ENCODE measurements at regions of chr9 and their contacts with region 1.

Region 1: GRCh38 chr9:13450723-13451122 is 171.2 kb upstream of the MPDZ start:
- DNase-seq: no peak
- ATAC-seq: peak in 1 of 4 donors; percentile 26
- H3K4me3 ChIP-seq: no peak overlapping the region
- H3K27ac ChIP-seq: no peak overlapping the region
- H3K4me1 ChIP-seq: peaks cover 0 to 47% (median 25%) of the 10 kb centered on the region in 12 donors
- H3K27me3 ChIP-seq: no peaks in the 10 kb centered on the region
- CTCF ChIP-seq: no peak
- POLR2A ChIP-seq: no peak

Region 2: DNA sequence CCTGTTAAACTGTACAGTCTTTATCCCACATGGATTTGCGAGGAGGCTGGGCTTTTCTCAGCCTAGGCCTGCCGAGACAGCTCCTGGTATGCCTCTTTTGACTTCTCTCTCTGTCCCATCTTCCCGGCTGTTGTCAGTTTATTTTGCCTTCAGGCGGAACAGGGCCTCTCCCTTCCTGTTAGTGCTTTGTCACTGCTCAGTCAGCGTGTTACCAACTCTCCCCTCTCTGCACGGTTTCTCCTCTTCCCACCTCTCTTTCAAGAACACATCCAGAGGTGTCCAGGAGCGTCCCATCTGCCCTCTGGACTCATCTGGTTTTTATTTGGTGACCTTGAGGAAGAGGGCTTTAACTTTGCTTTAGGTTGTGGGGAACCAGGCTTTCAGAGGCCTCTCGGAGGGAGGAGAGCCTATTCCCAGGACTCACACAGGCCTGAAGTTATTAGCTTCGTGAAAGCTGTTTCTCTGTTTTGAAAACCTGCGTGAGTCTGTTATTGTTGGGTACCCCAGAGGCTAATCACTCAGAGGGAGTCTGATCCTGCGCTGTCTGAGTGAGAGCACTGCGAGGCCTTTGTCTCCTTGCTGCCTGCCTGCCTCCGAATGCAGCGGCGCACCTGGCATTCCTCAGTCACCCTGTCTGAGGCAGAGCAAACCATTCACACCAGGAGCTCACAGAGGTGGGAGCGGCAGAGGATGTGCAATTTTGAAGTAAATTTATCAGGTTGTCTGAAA is 63.2 kb after region 1 on chr9:
- intact Hi-C with region 1: loop called in 1 of 10 experiments (anchors 10 kb)
- DNase-seq: peak in 1 of 5 donors; percentile 31
- ATAC-seq: peak; percentile 18 to 65 (median 56)
- H3K4me3 ChIP-seq: no peak overlapping the region
- H3K27ac ChIP-seq: peak overlapping the region; percentile 37 to 78 (median 66)
- H3K4me1 ChIP-seq: peaks cover 0 to 28% (median 12%) of the 10 kb centered on the region in 12 donors
- H3K27me3 ChIP-seq: no peaks in the 10 kb centered on the region
- CTCF ChIP-seq: no peak
- POLR2A ChIP-seq: no peak

Region 3: GRCh38 chr9:13575558-13575957 is 124.8 kb after region 1 on chr9:
- intact Hi-C with region 1: loop called in 1 of 10 experiments (anchors 5 kb)
- DNase-seq: peak in 3 of 5 donors; percentile 41 to 61 (median 50)
- ATAC-seq: peak; percentile 55 to 91 (median 70)
- H3K4me3 ChIP-seq: no peak overlapping the region
- H3K27ac ChIP-seq: peak overlapping the region in 10 of 12 donors; percentile 25 to 73 (median 43)
- H3K4me1 ChIP-seq: peaks cover 0 to 19% (median 6%) of the 10 kb centered on the region in 12 donors
- H3K27me3 ChIP-seq: no peaks in the 10 kb centered on the region
- CTCF ChIP-seq: no peak
- POLR2A ChIP-seq: no peak

Region 4: GRCh38 chr9:13621872-13622564 is 171.3 kb after region 1 on chr9:
- intact Hi-C with region 1: no loop called
- DNase-seq: no peak
- ATAC-seq: peak in 3 of 4 donors; percentile 83 to 91 (median 89)
- H3K4me3 ChIP-seq: no peak overlapping the region
- H3K27ac ChIP-seq: peak overlapping the region in 7 of 12 donors; percentile 4 to 64 (median 41)
- H3K4me1 ChIP-seq: peaks cover 0 to 16% (median 0%) of the 10 kb centered on the region in 12 donors
- H3K27me3 ChIP-seq: no peaks in the 10 kb centered on the region
- CTCF ChIP-seq: no peak
- POLR2A ChIP-seq: no peak

Region 5: DNA sequence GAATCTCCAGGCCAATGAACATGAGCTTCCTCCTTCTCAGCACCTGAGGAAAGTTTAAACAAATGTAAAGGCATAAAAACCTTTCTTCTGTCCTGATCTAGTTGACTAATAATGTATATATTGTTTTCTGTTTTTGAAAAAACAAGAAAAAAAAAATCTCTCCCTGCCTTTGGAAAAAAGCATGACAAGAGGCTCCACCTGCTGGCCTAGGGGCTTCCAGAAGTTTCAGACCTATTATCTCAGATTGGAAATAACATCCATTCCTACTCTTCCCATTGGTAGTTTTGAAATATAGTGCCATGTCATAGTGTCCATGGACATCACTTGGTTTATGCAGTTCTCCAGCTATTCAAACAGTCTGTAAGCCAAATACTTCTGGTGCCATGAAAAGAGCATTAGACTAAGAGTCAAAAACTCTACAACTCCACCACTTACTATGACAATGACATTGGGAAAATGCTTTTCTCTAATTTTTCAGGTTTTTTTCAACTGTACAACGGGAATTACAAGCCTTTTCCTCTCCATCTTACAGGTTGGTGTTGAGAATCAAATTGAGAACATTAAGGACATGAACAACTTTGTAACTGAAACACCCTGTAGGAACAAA is 238.4 kb after region 1 on chr9:
- intact Hi-C with region 1: loop called in 5 of 10 experiments (anchors 5 to 10 kb)
- DNase-seq: peak in 1 of 5 donors; percentile 32
- ATAC-seq: peak in 1 of 4 donors; percentile 23
- H3K4me3 ChIP-seq: no peak overlapping the region
- H3K27ac ChIP-seq: peak overlapping the region in 6 of 12 donors; percentile 1 to 33 (median 16)
- H3K4me1 ChIP-seq: peaks cover 0 to 30% (median 12%) of the 10 kb centered on the region in 12 donors
- H3K27me3 ChIP-seq: no peaks in the 10 kb centered on the region
- CTCF ChIP-seq: peak; percentile 35 to 64 (median 54)
- POLR2A ChIP-seq: no peak

Region 6: DNA sequence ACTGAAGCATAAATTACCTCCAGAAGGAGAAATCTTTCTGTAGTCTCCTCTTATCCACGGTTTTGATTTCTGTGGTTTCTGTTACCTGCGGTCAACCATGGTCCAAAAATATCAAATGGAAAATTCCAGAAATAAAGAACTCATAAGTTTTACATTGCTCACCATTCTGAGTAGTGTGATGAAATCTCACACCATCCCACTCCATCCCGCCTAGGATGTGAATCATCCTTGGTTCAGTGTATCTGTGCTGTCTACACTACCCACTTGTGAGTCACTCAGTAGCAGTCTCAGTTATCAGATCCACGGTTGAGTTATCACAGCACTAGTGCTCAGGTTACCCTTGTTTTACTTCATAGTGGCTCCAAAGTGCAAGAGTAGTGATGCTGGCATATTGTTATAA is 492.0 kb after region 1 on chr9:
- intact Hi-C with region 1: loop called in 1 of 10 experiments (anchors 10 kb)
- DNase-seq: peak in 1 of 5 donors; percentile 49
- ATAC-seq: peak; percentile 43 to 93 (median 82)
- H3K4me3 ChIP-seq: no peak overlapping the region
- H3K27ac ChIP-seq: peak overlapping the region in 6 of 12 donors; percentile 1 to 38 (median 15)
- H3K4me1 ChIP-seq: peaks cover 0 to 32% (median 16%) of the 10 kb centered on the region in 12 donors
- H3K27me3 ChIP-seq: no peaks in the 10 kb centered on the region
- CTCF ChIP-seq: no peak
- POLR2A ChIP-seq: no peak

Region 7: DNA sequence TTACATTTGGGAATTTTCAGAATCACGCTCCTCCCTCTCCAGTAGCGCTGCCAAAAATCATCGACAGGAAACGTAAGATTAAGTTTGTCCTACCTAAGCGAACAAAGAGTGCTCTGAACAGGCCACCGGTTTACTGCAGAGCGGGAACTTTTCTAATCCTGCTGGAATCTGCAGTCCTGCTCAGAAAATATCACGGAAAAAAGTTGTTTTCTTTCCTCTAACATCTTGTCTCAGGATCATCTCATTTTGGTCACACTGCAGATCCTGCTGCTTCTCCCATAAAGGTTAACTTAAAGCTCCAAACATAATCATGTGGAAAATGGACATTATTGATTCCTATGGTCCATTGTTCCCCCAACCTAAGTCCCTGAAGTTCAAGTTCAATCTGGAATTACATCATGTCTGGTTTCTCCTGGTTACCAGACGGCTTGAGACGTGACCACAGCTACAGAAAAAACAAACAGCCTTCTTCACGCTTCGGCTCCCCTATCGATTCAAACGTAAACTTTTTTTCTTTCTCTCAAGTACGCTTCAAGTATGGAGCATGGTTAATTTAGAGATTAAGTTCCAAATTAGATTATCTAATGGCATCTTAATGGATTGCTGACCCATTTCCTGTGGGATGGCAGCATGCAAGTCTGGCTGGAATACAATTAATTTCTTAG is 645.7 kb after region 1 on chr9:
- intact Hi-C with region 1: loop called in 4 of 10 experiments (anchors 10 kb)
- DNase-seq: peak in 4 of 5 donors; percentile 40 to 53 (median 42)
- ATAC-seq: peak; percentile 81 to 87 (median 84)
- H3K4me3 ChIP-seq: peak overlapping the region in 10 of 12 donors; percentile 9 to 48 (median 32)
- H3K27ac ChIP-seq: peak overlapping the region; percentile 39 to 90 (median 82)
- H3K4me1 ChIP-seq: peaks cover 0 to 71% (median 49%) of the 10 kb centered on the region in 12 donors
- H3K27me3 ChIP-seq: no peaks in the 10 kb centered on the region
- CTCF ChIP-seq: no peak
- POLR2A ChIP-seq: no peak

Measured in heart left ventricle (tissue), 16 donors.